ENCODE measurements at regions of chr5 and their contacts with region 1.

Region 1: DNA sequence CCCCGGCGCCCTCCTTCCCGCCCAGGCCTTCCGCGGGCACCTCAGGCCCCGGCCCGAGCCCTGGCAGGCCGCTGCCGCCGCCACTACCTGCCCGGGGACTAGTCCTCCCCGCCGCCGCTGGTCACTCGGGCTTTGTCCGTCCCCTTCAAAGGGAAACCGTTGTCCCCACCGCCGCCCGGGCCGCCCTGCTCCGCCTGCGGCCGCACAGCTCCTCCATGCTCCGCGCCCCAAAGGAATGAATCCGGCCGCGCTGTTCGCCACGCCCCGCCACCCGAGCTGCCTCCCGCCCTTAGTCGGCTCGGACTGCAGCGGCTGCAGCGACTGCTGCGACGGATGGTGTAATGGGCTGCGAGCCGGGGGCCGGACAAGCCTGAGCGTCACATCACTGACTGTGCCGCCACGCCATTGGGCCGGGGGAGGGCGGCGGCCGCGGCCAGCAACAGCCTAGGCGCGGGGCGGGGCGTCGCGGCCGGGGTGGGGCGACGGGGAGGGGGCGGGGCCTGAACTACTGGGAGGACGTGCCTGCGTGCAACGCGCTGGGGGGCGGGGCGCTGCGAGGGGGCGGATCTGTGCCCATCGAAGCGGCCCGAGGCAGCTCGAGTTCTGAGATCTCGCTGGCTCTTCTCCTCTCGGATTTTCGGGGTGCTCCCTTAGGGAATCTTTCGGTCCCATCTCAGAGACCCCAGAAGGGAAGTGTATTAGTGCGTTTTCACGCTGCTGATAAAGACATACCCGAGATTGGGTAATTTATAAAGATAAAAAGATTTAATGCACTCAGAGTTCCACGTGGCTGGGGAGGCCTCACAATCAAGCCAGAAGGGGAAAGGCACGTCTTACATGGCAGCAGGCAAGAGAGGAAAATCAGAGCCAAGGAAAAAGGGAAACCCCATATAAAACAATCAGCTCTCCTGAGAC is at the start of gene FEM1C:
- DNase-seq: peak; percentile 99
- H3K4me3 Mint-ChIP-seq: peak within 1 kb of the TSS; percentile 80
- H3K27ac Mint-ChIP-seq: peak within 1 kb of the TSS; percentile 78
- H3K4me1 Mint-ChIP-seq: peaks cover 15% of the 10 kb centered on the region
- H3K27me3 Mint-ChIP-seq: no peaks in the 10 kb centered on the region
- CTCF ChIP-seq: no peak
- total RNA-seq, gene FEM1C: 42.8 and 45.9 TPM in 2 replicates

Region 2: GRCh38 chr5:115377468-115378217 is 167.1 kb before region 1 on chr5:
- CTCF ChIA-PET with region 1: interaction called, 9 read pairs
- intact Hi-C with region 1: loop called (anchors 1 kb)
- DNase-seq: peak; percentile 30
- H3K4me3 Mint-ChIP-seq: peak overlapping the region; percentile 41
- H3K27ac Mint-ChIP-seq: peak overlapping the region; percentile 95
- H3K4me1 Mint-ChIP-seq: peaks cover 59% of the 10 kb centered on the region
- H3K27me3 Mint-ChIP-seq: no peaks in the 10 kb centered on the region
- CTCF ChIP-seq: no peak

Region 3: GRCh38 chr5:115530426-115530825 is 14.3 kb before region 1 on chr5:
- CTCF ChIA-PET with region 1: interaction called, 5 read pairs
- intact Hi-C with region 1: loop called (anchors 1 kb)
- DNase-seq: no peak
- H3K4me3 Mint-ChIP-seq: peak overlapping the region; percentile 69
- H3K27ac Mint-ChIP-seq: peak overlapping the region; percentile 85
- H3K4me1 Mint-ChIP-seq: peaks cover 75% of the 10 kb centered on the region
- H3K27me3 Mint-ChIP-seq: no peaks in the 10 kb centered on the region
- CTCF ChIP-seq: no peak

Region 4: DNA sequence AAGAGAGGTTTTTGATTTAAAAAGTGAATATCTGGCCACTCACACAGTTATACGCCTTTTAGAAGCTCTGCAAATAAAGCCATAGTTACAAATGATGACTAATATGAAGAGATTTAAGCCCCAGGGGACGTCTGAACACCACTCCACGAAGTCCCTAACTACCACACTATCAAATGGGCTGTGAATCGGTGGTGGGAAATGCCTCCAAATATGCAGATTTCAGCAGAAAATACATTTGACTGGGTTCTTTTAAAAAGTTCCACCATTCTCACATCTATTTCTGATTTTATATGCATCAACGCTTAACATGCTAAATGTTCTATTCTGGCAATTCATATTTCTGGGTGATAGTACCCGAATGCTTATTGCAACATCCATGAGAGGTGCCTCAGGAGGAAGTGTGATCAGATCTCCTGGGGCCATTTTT is 35.1 kb after region 1 on chr5:
- CTCF ChIA-PET with region 1: interaction called, 24 read pairs
- intact Hi-C with region 1: loop called (anchors 1 kb)
- DNase-seq: no peak
- H3K4me3 Mint-ChIP-seq: no peak overlapping the region
- H3K27ac Mint-ChIP-seq: no peak overlapping the region
- H3K4me1 Mint-ChIP-seq: peaks cover 13% of the 10 kb centered on the region
- H3K27me3 Mint-ChIP-seq: no peaks in the 10 kb centered on the region
- CTCF ChIP-seq: no peak

Region 5: DNA sequence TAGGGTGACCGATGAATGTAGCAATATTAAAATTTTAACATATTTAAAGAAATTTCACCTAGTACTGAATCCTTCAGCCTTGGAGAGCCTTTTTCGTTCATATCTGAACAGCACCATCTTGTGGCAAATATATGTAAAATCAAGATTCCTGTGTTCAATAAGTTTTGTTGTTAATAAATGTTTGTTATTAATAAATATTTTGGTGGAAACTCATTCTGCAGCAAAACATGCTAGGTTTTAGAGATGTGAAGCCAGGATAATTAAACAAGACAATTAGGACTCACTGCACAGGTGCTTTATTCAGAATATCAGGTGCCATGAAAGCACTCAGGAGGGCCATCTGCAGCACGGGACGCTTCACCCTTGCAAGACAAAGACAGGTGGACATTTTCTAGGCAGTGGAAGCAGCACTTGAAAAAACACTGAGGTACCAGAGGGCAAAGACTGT is 41.9 kb after region 1 on chr5:
- CTCF ChIA-PET with region 1: no interaction called
- intact Hi-C with region 1: loop called (anchors 1 kb)
- DNase-seq: no peak
- H3K4me3 Mint-ChIP-seq: no peak overlapping the region
- H3K27ac Mint-ChIP-seq: no peak overlapping the region
- H3K4me1 Mint-ChIP-seq: no peaks in the 10 kb centered on the region
- H3K27me3 Mint-ChIP-seq: no peaks in the 10 kb centered on the region
- CTCF ChIP-seq: peak; percentile 54

Measured in Calu3 (cell line).